Activated CD4-positive, alpha-beta memory T cell treated with anti-CD3 and anti-CD28 coated beads for 36 hours (primary cell): ENCODE measurements at regions of chr5 and their contacts with region 1.

Region 1: GRCh38 chr5:141618804-141619554 is at the start of gene DIAPH1:
- DNase-seq: peak; percentile 99
- H3K4me3 Mint-ChIP-seq: peak within 1 kb of the TSS; percentile 91
- H3K27ac Mint-ChIP-seq: peak within 1 kb of the TSS; percentile 98
- H3K4me1 Mint-ChIP-seq: peaks cover 57% of the 10 kb centered on the region
- H3K27me3 Mint-ChIP-seq: no peaks in the 10 kb centered on the region
- total RNA-seq, gene DIAPH1: 225 to 227 TPM

Region 2: DNA sequence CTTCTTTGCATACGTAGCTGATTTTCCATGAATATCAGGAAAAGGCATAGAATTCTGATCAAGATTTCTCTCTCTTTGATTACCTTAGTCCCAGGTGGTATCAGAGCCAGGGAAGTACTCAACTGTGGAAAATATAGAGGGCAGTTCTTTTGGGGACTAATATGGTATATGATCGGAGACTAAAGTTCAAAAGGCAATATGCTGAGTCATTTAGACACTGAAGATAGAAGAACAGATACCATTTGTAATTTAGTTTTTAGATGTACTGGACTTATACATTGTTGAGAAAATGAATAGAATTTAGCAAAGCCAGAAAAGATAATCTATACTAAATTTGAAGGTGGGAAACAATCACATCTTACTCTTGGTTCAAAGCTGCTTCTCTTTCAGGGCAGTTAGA is 513.6 kb before region 1 on chr5:
- CTCF ChIA-PET with region 1: no interaction called
- POLR2A ChIA-PET with region 1: no interaction called
- intact Hi-C with region 1: no loop called
- DNase-seq: no peak
- H3K4me3 Mint-ChIP-seq: no peak overlapping the region
- H3K27ac Mint-ChIP-seq: no peak overlapping the region
- H3K4me1 Mint-ChIP-seq: peaks cover 1% of the 10 kb centered on the region
- H3K27me3 Mint-ChIP-seq: peaks cover 14% of the 10 kb centered on the region

Region 3: GRCh38 chr5:141590127-141590526 is 28.9 kb before region 1 on chr5:
- CTCF ChIA-PET with region 1: interaction called, 364 read pairs
- POLR2A ChIA-PET with region 1: interaction called, 31 read pairs
- intact Hi-C with region 1: loop called (anchors 1 kb)
- DNase-seq: no peak
- H3K4me3 Mint-ChIP-seq: no peak overlapping the region
- H3K27ac Mint-ChIP-seq: no peak overlapping the region
- H3K4me1 Mint-ChIP-seq: peaks cover 39% of the 10 kb centered on the region
- H3K27me3 Mint-ChIP-seq: no peaks in the 10 kb centered on the region

Region 4: GRCh38 chr5:141605523-141606277 is 13.3 kb before region 1 on chr5:
- CTCF ChIA-PET with region 1: interaction called, 106 read pairs
- POLR2A ChIA-PET with region 1: interaction called, 51 read pairs
- intact Hi-C with region 1: loop called (anchors 1 kb)
- DNase-seq: peak; percentile 80
- H3K4me3 Mint-ChIP-seq: peak overlapping the region; percentile 76
- H3K27ac Mint-ChIP-seq: peak overlapping the region; percentile 97
- H3K4me1 Mint-ChIP-seq: peaks cover 81% of the 10 kb centered on the region
- H3K27me3 Mint-ChIP-seq: no peaks in the 10 kb centered on the region

Region 5: GRCh38 chr5:141641634-141642267 is 22.8 kb after region 1 on chr5:
- CTCF ChIA-PET with region 1: interaction called, 81 read pairs
- POLR2A ChIA-PET with region 1: interaction called, 44 read pairs
- intact Hi-C with region 1: loop called (anchors 1 kb)
- DNase-seq: peak; percentile 35
- H3K4me3 Mint-ChIP-seq: no peak overlapping the region
- H3K27ac Mint-ChIP-seq: peak overlapping the region; percentile 40
- H3K4me1 Mint-ChIP-seq: peaks cover 29% of the 10 kb centered on the region
- H3K27me3 Mint-ChIP-seq: no peaks in the 10 kb centered on the region

Region 6: DNA sequence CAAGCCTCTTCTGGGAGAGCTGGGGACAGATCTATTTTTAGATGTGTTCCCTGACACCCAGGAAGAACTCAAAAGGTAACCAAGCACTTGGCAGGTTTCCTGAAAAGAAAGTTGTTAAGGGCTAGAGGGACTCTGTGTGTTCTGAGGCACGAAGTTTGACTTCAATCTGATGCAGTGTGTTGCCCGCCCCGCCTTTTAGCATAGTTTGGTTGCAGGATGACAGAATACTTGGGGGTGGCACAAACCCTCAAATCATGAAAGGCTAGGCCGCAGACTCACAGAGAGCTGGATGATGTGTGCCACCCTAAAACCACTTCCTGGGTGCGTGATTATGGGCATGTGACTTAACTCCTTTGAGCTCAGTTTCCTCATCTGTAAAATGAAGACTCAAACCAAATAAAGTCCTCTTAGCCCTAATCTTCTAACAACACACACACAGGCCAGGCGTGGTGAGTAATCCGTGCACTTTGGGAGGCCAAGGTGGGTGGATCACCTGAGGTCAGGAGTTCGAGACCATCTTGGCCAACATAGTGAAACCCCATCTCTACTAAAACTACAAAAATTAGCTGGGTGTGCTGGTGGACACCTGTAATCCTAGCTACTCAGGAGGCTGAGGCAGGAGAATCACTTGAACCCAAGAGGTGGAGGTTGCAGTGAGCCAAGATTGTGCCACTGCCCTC is 476.8 kb after region 1 on chr5:
- CTCF ChIA-PET with region 1: no interaction called
- POLR2A ChIA-PET with region 1: no interaction called
- intact Hi-C with region 1: loop called (anchors 10 kb)
- DNase-seq: peak; percentile 93
- H3K4me3 Mint-ChIP-seq: peak overlapping the region; percentile 48
- H3K27ac Mint-ChIP-seq: peak overlapping the region; percentile 95
- H3K4me1 Mint-ChIP-seq: peaks cover 63% of the 10 kb centered on the region
- H3K27me3 Mint-ChIP-seq: no peaks in the 10 kb centered on the region